SK-N-SH (cell line): ENCODE measurements at regions of chr15 and their contacts with region 1.

Region 1: GRCh38 chr15:89442671-89443307 is 53.6 kb downstream of the RHCG start:
- DNase-seq: peak; percentile 88
- H3K4me3 ChIP-seq: peak overlapping the region in 1 of 2 experiments; percentile 17; a peak in 1 of 4 replicates
- H3K27ac ChIP-seq: no peak overlapping the region
- H3K4me1 ChIP-seq: peaks cover 0 to 43% of the 10 kb centered on the region in 2 experiments; a peak in 1 of 4 replicates
- H3K27me3 ChIP-seq: no peaks in the 10 kb centered on the region
- CTCF ChIP-seq: peak; percentile 84
- EP300 ChIP-seq: no peak
- RAD21 ChIP-seq: peak; percentile 82

Region 2: DNA sequence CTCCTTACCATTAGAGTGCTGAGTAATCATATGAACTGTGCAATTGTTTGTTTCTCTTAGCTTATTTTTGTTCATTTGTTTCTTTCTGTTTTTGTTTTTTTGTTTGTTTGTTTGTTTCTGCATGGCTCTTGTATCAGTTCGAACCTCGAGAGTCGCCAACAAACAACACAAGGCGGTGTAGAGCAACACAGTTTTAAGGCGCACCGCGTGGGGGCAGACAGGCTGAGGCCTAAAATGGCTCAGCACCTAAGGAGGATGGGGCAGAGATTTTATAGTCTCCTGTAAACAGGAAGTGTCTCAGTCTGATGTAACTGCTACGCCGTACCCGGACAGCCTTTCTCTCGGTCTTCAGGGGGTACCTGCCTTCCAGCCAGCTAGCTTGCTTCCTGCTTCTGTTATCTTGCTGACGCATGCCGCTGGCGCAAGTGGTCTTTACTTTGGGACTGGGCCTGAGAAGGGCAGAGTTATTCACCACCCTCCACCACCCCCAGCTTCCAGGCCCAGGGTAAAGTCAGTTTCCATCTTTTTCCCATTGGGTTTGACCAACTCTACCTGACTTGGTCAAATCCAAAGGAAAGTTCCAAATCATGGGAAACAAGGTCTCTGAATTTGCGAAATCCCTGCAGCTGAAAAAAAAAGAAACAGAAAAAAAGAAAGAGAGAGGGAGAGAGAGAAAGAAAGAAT is 503.8 kb before region 1 on chr15:
- CTCF ChIA-PET with region 1: no interaction called
- POLR2A ChIA-PET with region 1: no interaction called
- DNase-seq: no peak
- H3K4me3 ChIP-seq: no peak overlapping the region
- H3K27ac ChIP-seq: no peak overlapping the region
- H3K4me1 ChIP-seq: no peaks in the 10 kb centered on the region
- H3K27me3 ChIP-seq: no peaks in the 10 kb centered on the region
- CTCF ChIP-seq: no peak
- EP300 ChIP-seq: no peak
- RAD21 ChIP-seq: no peak

Region 3: DNA sequence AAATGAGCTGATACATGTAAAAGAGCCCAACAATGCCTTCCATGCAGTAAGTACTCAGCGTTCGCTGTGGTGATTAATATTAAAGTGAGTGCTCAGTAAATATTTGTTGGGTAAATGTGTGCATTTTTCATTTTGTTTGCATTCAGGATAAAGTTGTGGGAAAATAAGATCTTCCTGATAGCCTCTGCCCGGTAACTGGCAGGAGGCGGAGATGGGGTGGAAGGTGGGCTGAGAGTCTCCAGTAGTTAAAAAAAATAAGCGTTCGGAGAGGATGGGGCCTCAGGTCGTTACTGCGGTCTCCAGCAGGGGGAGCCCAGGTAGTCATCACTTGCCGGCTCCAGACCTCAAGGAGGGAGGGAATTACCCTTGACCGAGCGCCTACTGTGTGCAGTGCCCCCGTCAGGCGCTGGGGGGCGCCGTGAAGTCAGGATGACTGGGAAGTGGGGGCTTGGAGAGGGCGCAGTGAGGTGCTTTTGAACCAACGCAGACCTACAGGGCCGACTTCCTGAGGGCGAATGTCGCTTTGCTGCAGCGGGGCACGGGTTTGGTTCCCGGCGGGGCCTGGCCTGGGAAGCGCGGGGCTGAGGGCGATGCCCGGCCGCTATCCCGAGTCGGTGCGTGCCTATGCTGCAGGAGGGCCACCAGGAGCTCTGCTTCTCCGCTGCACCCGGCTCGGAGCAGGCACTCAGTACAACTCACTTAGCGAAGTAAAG is 26.5 kb before region 1 on chr15:
- CTCF ChIA-PET with region 1: interaction called, 17 read pairs
- POLR2A ChIA-PET with region 1: no interaction called
- DNase-seq: peak; percentile 96
- H3K4me3 ChIP-seq: peak overlapping the region in 1 of 2 experiments; percentile 60; a peak in 1 of 4 replicates
- H3K27ac ChIP-seq: no peak overlapping the region
- H3K4me1 ChIP-seq: no peaks in the 10 kb centered on the region; a peak in 1 of 4 replicates
- H3K27me3 ChIP-seq: no peaks in the 10 kb centered on the region
- CTCF ChIP-seq: peak; percentile 90
- EP300 ChIP-seq: no peak
- RAD21 ChIP-seq: peak; percentile 57

Region 4: GRCh38 chr15:89423981-89424380 is 18.8 kb before region 1 on chr15:
- CTCF ChIA-PET with region 1: interaction called, 51 read pairs
- POLR2A ChIA-PET with region 1: interaction called, 3 read pairs
- DNase-seq: no peak
- H3K4me3 ChIP-seq: no peak overlapping the region
- H3K27ac ChIP-seq: no peak overlapping the region
- H3K4me1 ChIP-seq: no peaks in the 10 kb centered on the region; a peak in 1 of 4 replicates
- H3K27me3 ChIP-seq: no peaks in the 10 kb centered on the region
- CTCF ChIP-seq: no peak
- EP300 ChIP-seq: no peak
- RAD21 ChIP-seq: no peak

Region 5: DNA sequence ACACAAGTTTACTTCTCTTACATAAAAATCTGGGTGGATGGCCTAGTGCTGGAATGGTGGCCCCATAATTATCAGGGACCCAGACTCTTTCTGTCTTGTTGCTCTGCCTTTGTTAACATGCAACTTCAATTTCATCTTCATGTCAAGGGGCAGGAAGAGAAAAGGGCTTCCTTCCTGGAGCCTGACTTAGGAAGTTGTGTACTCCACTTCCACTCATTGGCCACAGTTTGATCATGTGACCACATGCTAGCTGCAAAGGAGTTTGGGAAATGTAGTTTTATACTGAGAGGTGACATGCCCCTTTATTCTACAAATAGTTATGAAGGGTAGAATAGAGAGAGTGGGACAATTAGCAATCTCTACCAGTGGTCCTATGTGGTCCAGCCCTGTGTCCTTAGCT is 14.3 kb after region 1 on chr15:
- CTCF ChIA-PET with region 1: interaction called, 33 read pairs
- POLR2A ChIA-PET with region 1: no interaction called
- DNase-seq: peak; percentile 58
- H3K4me3 ChIP-seq: no peak overlapping the region
- H3K27ac ChIP-seq: no peak overlapping the region
- H3K4me1 ChIP-seq: peaks cover 0 to 10% of the 10 kb centered on the region in 2 experiments; a peak in 1 of 4 replicates
- H3K27me3 ChIP-seq: no peaks in the 10 kb centered on the region
- CTCF ChIP-seq: no peak
- EP300 ChIP-seq: no peak
- RAD21 ChIP-seq: no peak

Region 6: GRCh38 chr15:89462331-89462912 is 19.6 kb after region 1 on chr15:
- CTCF ChIA-PET with region 1: interaction called, 53 read pairs
- POLR2A ChIA-PET with region 1: interaction called, 5 read pairs
- DNase-seq: no peak
- H3K4me3 ChIP-seq: no peak overlapping the region
- H3K27ac ChIP-seq: no peak overlapping the region
- H3K4me1 ChIP-seq: peaks cover 0 to 6% of the 10 kb centered on the region in 2 experiments; a peak in 1 of 4 replicates
- H3K27me3 ChIP-seq: no peaks in the 10 kb centered on the region
- CTCF ChIP-seq: no peak
- EP300 ChIP-seq: no peak
- RAD21 ChIP-seq: no peak

Region 7: DNA sequence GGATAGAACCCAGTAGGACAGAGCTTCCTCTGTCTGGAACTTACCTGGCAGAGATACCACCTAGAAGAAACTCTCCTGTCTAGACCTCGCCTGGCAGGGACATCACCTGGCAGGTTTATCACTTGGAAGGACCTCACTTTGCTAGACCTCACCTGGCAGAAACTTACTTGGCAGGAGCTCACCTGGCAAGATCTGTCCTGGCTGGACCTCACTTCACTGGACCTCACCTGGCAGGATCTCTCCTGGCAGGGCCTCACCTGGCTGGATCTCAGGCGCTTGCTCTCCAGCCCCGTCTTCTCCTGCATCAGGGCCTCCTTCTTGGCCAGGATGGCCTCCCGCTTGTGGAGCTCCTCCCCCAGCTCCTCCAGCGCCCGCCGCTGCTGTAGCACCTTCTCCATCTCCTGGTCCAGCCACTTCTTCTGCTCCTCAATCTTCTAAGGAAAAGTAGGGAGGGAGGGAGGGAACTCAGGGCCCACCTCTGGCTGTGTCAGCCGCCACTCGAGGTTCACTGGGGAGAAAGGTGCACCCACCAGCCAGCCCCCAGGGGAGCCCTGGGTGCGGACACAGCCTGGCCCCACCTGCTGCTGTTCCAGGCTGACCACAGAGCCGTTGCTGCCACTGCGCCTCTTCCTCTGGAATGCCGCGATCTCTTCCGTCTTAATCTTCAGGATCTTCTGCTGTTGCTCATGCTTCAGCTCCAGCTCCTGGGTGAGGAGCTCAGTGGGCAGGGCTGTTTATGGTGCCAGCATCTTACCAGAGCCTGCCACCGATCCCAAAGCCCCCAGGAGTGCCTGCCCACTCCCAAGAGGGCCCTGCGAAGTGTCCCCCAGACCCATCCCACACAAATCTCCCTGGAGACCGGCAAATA is 190.0 kb after region 1 on chr15:
- CTCF ChIA-PET with region 1: no interaction called
- POLR2A ChIA-PET with region 1: no interaction called
- DNase-seq: peak; percentile 14
- H3K4me3 ChIP-seq: no peak overlapping the region
- H3K27ac ChIP-seq: no peak overlapping the region; a peak in 1 of 4 replicates
- H3K4me1 ChIP-seq: no peaks in the 10 kb centered on the region
- H3K27me3 ChIP-seq: no peaks in the 10 kb centered on the region
- CTCF ChIP-seq: no peak
- EP300 ChIP-seq: no peak
- RAD21 ChIP-seq: no peak